Ovary (tissue), 10 donors: ENCODE measurements at regions of chr3 and their contacts with region 1.

Region 1: GRCh38 chr3:129101370-129102138 is 20.1 kb downstream of the RAB43 start:
- DNase-seq: no peak
- H3K4me3 ChIP-seq: no peak overlapping the region
- H3K27ac ChIP-seq: no peak overlapping the region
- H3K4me1 ChIP-seq: peaks cover 14% of the 10 kb centered on the region
- H3K27me3 ChIP-seq: no peaks in the 10 kb centered on the region
- CTCF ChIP-seq: no peak
- EP300 ChIP-seq: no peak
- POLR2A ChIP-seq: no peak

Region 2: DNA sequence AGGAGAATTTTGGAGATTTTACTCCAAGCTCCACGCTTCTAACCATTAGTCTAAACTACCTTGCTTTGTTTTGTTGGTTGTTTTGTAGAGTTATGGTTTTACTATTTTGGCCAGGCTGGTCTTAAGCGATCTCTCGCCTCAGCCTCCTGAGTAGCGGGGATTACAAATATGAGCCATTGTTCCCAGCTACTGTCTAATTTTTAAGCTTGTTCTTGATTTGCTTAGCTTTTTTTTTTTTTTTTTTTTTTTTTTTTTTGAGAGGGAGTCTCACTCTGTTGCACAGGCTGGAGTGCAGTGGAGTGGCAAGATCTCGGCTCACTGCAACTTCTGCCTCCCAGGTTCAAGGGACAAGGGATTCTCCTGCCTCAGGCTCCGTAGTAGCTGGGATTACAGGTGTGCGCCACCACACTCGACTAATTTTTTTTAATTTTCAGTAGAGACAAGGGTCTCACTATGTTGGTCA is 298.4 kb after region 1 on chr3:
- intact Hi-C with region 1: loop called in 1 of 4 experiments (anchors 5 kb)
- DNase-seq: peak in 1 of 5 donors; percentile 33
- H3K4me3 ChIP-seq: no peak overlapping the region
- H3K27ac ChIP-seq: peak overlapping the region; percentile 43 to 89
- H3K4me1 ChIP-seq: peaks cover 3% of the 10 kb centered on the region
- H3K27me3 ChIP-seq: no peaks in the 10 kb centered on the region
- CTCF ChIP-seq: no peak
- EP300 ChIP-seq: no peak
- POLR2A ChIP-seq: peak; percentile 15